ENCODE measurements at regions of chr2 and their contacts with region 1.

Region 1: DNA sequence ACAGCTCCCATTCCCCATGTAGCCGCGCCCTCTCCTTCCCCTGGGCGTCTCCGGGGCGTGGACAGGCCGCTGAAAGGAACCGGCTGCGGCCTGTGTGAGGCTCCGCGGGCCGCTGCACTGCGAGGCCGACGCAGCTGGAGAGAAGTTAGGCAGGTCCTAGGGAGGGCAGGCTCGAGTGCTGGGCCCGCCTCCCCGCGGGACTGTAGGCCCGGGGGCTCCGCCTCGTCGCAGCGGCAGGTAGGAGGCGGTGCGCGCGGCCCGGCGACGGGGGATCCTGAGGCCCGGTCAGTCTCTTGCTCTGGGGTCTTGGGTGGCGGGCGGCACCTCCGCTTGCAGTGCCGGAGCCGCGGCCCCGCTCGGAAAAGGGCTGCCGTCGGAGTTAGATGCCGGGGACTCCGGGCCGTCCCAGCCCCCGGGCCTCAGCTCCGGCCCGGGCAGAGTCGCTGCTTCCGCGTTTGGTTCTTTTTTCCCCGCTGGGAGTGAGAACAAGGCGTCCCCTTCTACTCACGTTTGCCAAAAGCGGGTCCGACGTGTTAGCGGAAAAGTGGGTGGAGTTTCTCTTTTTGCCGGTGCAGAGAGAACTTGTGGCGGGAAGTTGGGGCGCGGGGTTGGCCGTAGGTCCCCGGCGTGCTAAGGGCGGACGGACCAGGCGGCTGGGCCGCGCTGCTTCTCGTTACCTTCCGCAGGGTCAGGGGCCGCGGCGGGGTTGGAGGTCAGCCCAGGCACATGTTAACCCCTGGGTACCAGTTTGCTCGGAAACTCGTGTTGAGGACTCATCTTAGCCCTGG is at the start of gene VRK2:
- DNase-seq: peak; percentile 93
- H3K4me3 ChIP-seq: peak within 1 kb of the TSS; percentile 73
- H3K27ac ChIP-seq: peak within 1 kb of the TSS; percentile 98
- H3K4me1 ChIP-seq: peaks cover 4% of the 10 kb centered on the region
- H3K27me3 ChIP-seq: no peaks in the 10 kb centered on the region
- CTCF ChIP-seq: no peak
- total RNA-seq, gene VRK2: 20.5 to 27.2 TPM

Region 2: GRCh38 chr2:57920342-57920939 is 126.3 kb before region 1 on chr2:
- intact Hi-C with region 1: no loop called
- DNase-seq: no peak
- H3K4me3 ChIP-seq: no peak overlapping the region
- H3K27ac ChIP-seq: no peak overlapping the region
- H3K4me1 ChIP-seq: no peaks in the 10 kb centered on the region
- H3K27me3 ChIP-seq: no peaks in the 10 kb centered on the region
- CTCF ChIP-seq: no peak

Region 3: DNA sequence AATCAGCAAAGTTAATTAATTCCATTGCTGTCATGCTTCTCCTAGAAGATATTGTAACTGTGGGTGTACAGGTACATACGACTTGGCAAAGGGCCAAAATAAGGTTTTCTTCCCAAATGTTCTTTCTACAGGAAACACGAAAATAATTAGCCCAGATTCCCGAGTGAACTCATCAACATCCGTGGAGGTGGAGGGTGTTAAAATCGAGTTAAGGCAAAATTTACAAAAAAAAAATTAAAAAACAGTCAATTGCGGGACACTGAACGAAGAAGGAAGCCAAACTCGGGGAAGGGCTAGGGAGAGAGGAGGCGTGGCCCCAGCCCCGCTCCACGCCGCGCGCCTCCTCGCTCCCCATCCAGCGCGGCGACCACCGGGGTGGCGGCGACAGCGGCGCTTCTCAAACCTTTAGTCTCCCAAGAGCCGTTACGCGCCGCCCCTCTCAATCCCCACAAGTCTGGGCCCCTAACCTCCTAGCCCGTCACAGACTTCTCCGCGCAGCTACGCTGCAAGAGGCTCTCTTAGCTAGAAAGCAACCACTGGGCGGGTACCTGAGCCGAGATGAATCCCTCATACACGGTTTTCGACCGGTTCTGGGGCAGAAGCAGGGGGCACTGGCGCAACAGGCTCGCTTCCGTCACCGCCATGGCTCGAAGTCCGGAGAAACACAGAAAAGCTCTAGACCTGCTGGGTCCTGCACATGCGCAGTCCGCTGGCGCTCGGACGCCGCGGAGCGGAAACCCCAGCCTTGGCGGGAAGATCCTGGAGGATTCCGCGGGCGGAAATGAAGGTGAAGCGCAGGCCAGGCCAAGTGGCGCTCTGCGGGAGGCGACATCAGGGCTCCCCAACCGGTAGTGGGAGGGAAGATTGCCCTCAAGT is 194.1 kb after region 1 on chr2 and contains the start of gene FANCL:
- intact Hi-C with region 1: loop called (anchors 10 kb)
- DNase-seq: peak; percentile 93
- H3K4me3 ChIP-seq: peak within 1 kb of the TSS; percentile 80
- H3K27ac ChIP-seq: peak within 1 kb of the TSS; percentile 80
- H3K4me1 ChIP-seq: no peaks in the 10 kb centered on the region
- H3K27me3 ChIP-seq: no peaks in the 10 kb centered on the region
- CTCF ChIP-seq: no peak
- total RNA-seq, gene FANCL: 15.0 to 21.6 TPM

Region 4: DNA sequence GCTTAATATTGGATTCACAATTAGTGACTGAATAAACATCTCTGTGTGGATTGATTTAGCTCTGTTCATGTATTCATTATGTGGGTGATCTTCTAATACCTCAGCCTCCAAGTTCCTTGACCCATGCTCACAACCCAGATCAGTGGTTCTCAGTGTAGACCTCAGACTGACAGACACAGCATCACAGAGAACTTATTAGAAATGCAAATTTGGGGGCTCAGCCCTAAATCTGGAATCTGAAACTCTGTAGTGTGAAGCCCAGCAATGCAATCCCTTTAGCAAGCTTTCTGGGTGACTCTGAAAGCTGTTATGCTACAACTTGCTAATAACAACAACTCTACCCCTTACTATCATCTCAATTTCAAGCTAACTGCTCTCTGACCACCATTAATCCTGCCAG is 467.5 kb after region 1 on chr2:
- intact Hi-C with region 1: no loop called
- DNase-seq: no peak
- H3K4me3 ChIP-seq: no peak overlapping the region
- H3K27ac ChIP-seq: no peak overlapping the region
- H3K4me1 ChIP-seq: no peaks in the 10 kb centered on the region
- H3K27me3 ChIP-seq: no peaks in the 10 kb centered on the region
- CTCF ChIP-seq: no peak